CD14-positive monocyte (primary cell): ENCODE measurements at regions of chr3 and their contacts with region 1.

Region 1: DNA sequence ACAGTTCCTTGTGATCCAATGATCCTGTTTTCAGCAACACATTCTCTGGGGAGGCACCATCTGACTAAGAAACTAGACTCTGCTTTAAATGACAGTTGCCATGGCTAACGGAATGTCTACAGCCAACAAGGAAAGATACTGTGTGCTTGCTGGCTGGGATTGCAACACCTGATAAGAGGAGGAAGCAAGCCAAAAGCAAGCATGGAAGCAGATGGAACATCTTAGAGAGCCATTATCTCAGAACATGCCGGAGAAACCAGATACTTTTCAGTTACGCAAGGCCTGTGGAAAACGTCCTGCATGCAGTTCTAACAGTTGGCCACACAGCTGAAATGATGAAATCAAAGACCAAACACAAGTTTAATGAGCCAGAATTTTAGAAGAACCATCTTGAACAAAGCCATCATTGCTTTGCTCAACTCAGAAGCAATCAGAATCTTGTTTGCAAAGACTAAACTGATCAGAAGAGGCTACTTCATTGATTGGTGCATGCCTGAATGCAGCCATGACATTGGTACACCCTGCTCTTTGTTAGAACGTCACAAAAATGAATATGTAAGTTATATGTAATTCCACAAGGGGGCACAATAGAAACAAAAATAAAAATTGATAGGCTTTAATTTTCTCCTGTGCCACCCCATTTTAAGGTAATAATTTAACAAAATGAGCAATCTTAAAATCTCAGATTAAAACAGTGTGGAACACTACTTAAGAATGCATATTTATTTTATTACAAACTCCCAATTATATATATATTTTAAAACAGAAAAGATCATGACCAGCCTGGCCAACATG is 50.8 kb downstream of the GXYLT2 start:
- DNase-seq: peak; percentile 40 to 58 (median 56)
- H3K4me3 ChIP-seq: peak overlapping the region in 2 of 3 experiments; percentile 9 to 49
- H3K4me3 Mint-ChIP-seq: peak overlapping the region; percentile 20 to 79
- H3K27ac ChIP-seq: no peak overlapping the region
- H3K27ac Mint-ChIP-seq: peak overlapping the region in 2 of 7 donors; percentile 1 to 43
- H3K4me1 ChIP-seq: peaks cover 6% of the 10 kb centered on the region in 2 donors
- H3K4me1 Mint-ChIP-seq: peaks cover 4% of the 10 kb centered on the region
- H3K27me3 ChIP-seq: no peaks in the 10 kb centered on the region
- H3K27me3 Mint-ChIP-seq: no peaks in the 10 kb centered on the region
- CTCF ChIP-seq: peak; percentile 95

Region 2: GRCh38 chr3:72549761-72550581 is 388.7 kb before region 1 on chr3:
- intact Hi-C with region 1: no loop called
- DNase-seq: peak in 1 of 3 donors; percentile 14
- H3K4me3 ChIP-seq: peak overlapping the region; percentile 6 to 60 (median 20)
- H3K4me3 Mint-ChIP-seq: peak overlapping the region; percentile 66 to 84
- H3K27ac ChIP-seq: peak overlapping the region in 1 of 2 donors; percentile 34
- H3K27ac Mint-ChIP-seq: peak overlapping the region; percentile 8 to 85 (median 69)
- H3K4me1 ChIP-seq: peaks cover 18 to 19% of the 10 kb centered on the region in 2 donors
- H3K4me1 Mint-ChIP-seq: peaks cover 24% of the 10 kb centered on the region
- H3K27me3 ChIP-seq: no peaks in the 10 kb centered on the region
- H3K27me3 Mint-ChIP-seq: peaks cover 0 to 6% (median 3%) of the 10 kb centered on the region in 3 donors
- CTCF ChIP-seq: no peak

Region 3: GRCh38 chr3:72830452-72831217 is 108.0 kb before region 1 on chr3:
- intact Hi-C with region 1: no loop called
- DNase-seq: no peak
- H3K4me3 ChIP-seq: no peak overlapping the region
- H3K4me3 Mint-ChIP-seq: no peak overlapping the region
- H3K27ac ChIP-seq: no peak overlapping the region
- H3K27ac Mint-ChIP-seq: no peak overlapping the region
- H3K4me1 ChIP-seq: no peaks in the 10 kb centered on the region
- H3K4me1 Mint-ChIP-seq: no peaks in the 10 kb centered on the region
- H3K27me3 ChIP-seq: no peaks in the 10 kb centered on the region
- H3K27me3 Mint-ChIP-seq: peaks cover 0 to 2% (median 1%) of the 10 kb centered on the region in 3 donors
- CTCF ChIP-seq: no peak

Region 4: DNA sequence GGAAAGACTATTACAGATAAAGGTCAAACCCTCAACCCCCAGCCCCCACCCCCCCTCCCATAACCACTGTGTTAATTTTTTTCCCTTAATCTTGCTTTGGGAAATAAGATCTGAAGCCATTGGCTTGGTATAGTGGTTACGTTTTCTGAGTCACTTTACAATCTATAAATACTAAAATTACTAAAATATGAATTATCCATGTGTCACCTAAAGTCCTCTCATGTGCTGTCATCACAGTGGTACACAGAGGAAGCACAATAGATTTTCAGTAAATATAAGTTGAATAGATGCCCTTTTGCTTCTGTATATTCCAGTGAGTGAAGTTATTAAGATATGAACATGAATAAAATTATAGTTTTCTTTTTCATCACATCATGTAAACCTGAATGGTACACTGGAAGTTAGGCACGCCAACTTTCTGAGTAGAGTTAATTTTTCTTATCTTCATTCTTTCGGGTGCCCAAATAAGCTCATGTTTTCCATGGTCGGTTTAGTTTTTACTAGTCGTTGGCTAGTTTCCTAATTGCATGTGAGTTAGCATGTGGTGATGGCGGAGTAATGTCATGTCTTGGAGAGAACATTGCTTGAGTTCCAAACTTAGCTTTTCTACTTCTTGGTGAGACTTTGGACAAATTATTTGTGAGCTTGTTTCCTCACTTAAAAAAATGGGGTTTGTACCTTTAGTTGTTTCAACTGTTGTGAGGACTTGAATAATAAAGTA is 69.5 kb after region 1 on chr3:
- intact Hi-C with region 1: no loop called
- DNase-seq: no peak
- H3K4me3 ChIP-seq: no peak overlapping the region
- H3K4me3 Mint-ChIP-seq: no peak overlapping the region
- H3K27ac ChIP-seq: no peak overlapping the region
- H3K27ac Mint-ChIP-seq: peak overlapping the region in 1 of 7 donors; percentile 1
- H3K4me1 ChIP-seq: no peaks in the 10 kb centered on the region
- H3K4me1 Mint-ChIP-seq: peaks cover 15% of the 10 kb centered on the region
- H3K27me3 ChIP-seq: no peaks in the 10 kb centered on the region
- H3K27me3 Mint-ChIP-seq: peaks cover 0 to 2% (median 0%) of the 10 kb centered on the region in 3 donors
- CTCF ChIP-seq: no peak

Region 5: GRCh38 chr3:73056014-73056844 is 117.6 kb after region 1 on chr3:
- intact Hi-C with region 1: loop called (anchors 2 to 5 kb)
- DNase-seq: peak; percentile 7 to 39 (median 13)
- H3K4me3 ChIP-seq: no peak overlapping the region
- H3K4me3 Mint-ChIP-seq: no peak overlapping the region
- H3K27ac ChIP-seq: peak overlapping the region in 1 of 2 donors; percentile 26
- H3K27ac Mint-ChIP-seq: peak overlapping the region in 2 of 7 donors; percentile 2 to 16
- H3K4me1 ChIP-seq: no peaks in the 10 kb centered on the region
- H3K4me1 Mint-ChIP-seq: peaks cover 2% of the 10 kb centered on the region
- H3K27me3 ChIP-seq: no peaks in the 10 kb centered on the region
- H3K27me3 Mint-ChIP-seq: no peaks in the 10 kb centered on the region
- CTCF ChIP-seq: peak; percentile 73

Region 6: GRCh38 chr3:73086071-73086494 is 147.4 kb after region 1 on chr3:
- intact Hi-C with region 1: loop called in 1 of 2 experiments (anchors 10 kb)
- DNase-seq: peak; percentile 19 to 38 (median 36)
- H3K4me3 ChIP-seq: no peak overlapping the region
- H3K4me3 Mint-ChIP-seq: no peak overlapping the region
- H3K27ac ChIP-seq: no peak overlapping the region
- H3K27ac Mint-ChIP-seq: peak overlapping the region in 1 of 7 donors; percentile 82
- H3K4me1 ChIP-seq: no peaks in the 10 kb centered on the region
- H3K4me1 Mint-ChIP-seq: peaks cover 3% of the 10 kb centered on the region
- H3K27me3 ChIP-seq: no peaks in the 10 kb centered on the region
- H3K27me3 Mint-ChIP-seq: peaks cover 0 to 2% (median 0%) of the 10 kb centered on the region in 3 donors
- CTCF ChIP-seq: peak; percentile 91

Region 7: GRCh38 chr3:73197187-73197586 is 258.5 kb after region 1 on chr3:
- intact Hi-C with region 1: no loop called
- DNase-seq: no peak
- H3K4me3 ChIP-seq: no peak overlapping the region
- H3K4me3 Mint-ChIP-seq: no peak overlapping the region
- H3K27ac ChIP-seq: no peak overlapping the region
- H3K27ac Mint-ChIP-seq: no peak overlapping the region
- H3K4me1 ChIP-seq: no peaks in the 10 kb centered on the region
- H3K4me1 Mint-ChIP-seq: no peaks in the 10 kb centered on the region
- H3K27me3 ChIP-seq: no peaks in the 10 kb centered on the region
- H3K27me3 Mint-ChIP-seq: peaks cover 3 to 6% (median 4%) of the 10 kb centered on the region in 3 donors
- CTCF ChIP-seq: no peak